Activated CD8-positive, alpha-beta T cell treated with anti-CD3 and anti-CD28 coated beads, Interleukin-2, amount 10 ng/mL, durations not matched to agents 7 days and 5 days (primary cell): ENCODE measurements at regions of chr10 and their contacts with region 1.

Region 1: DNA sequence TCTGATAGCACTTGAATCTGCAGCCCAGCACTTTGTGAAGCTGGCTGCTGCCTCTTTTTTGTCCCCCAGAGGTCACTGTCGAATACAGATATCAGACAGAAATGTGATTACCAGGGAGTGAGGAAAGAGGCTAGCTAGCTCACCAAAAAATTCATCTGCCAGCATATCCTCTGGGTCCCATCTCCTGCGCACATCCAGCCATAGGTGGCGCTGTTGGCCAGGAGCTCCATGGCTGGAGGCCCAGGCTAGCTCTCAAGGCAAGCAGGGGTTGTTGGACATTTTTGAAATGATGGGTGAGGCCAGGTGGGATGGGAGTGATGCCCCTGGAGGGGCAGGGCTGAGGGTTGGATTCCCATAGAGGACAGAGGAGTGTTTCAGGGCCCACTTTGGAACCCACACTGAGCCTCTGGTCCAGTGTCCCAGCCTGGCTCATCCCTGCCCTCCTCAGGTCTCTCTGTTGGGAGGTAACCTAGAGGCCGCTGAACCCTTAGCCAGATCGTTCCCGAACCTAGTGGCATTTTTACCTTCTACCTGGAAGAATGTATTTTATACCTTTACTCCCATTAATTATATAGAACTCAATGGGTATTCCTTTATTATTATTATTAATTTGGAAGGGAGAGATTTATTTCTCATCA is 14.8 kb downstream of the DPCD start:
- DNase-seq: peak; percentile 83
- ATAC-seq: peak; percentile 97
- H3K4me3 Mint-ChIP-seq: no peak overlapping the region
- H3K27ac Mint-ChIP-seq: no peak overlapping the region
- H3K4me1 Mint-ChIP-seq: no peaks in the 10 kb centered on the region
- H3K27me3 Mint-ChIP-seq: no peaks in the 10 kb centered on the region

Region 2: DNA sequence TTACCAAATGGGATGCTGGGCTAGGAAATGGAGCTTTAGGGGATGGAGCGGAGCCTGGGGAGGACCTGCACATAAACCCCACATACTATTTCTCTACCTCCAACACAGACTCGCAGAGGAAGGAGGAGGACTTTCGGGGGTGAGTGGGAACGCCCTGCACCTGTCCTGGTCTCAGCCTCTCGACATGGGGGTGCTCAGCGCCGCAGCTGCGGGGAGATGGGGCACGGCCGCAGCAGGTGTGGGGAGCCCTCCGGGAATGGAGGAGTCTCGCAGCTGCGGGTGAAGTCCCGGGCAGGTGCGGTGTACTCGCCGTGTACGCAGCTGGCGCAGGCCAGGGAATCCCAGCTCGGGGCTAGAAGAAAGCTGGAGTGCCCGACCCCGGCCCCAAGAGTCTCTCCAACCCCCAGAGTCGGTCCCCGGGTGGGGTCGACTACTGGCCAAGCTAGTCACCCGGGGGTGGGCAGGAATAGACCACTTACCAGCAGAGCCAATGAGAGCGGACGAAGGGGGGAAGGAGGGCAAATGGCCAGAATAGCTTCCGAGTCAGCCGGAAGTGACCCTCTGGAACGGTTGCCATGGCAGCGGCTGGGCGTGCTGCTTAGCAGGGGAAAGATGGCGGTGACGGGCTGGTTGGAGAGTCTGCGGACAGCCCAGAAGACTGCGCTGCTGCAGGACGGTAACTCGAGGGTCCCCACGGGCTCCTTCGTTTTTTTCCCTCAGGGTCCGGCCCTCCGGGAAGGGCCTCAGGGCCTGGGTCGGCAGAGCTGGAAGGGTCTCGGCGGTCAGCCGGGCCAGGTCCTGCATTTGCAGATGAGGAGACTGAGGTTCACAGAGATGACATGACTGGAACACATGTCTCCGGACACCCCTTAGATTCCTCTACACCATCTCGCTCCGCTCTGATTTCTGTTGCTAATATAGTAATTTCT is 14.9 kb before region 1 on chr10 and contains the starts of genes DPCD and POLL:
- CTCF ChIA-PET with region 1: interaction called, 22 read pairs
- POLR2A ChIA-PET with region 1: no interaction called
- DNase-seq: peak; percentile 95
- ATAC-seq: peak; percentile 94
- H3K4me3 Mint-ChIP-seq: peak within 1 kb of the TSS; percentile 91
- H3K27ac Mint-ChIP-seq: peak within 1 kb of the TSS; percentile 85
- H3K4me1 Mint-ChIP-seq: peaks cover 24% of the 10 kb centered on the region
- H3K27me3 Mint-ChIP-seq: no peaks in the 10 kb centered on the region
- total RNA-seq, gene DPCD: 5.1 to 6.2 TPM
- total RNA-seq, gene POLL: 25.3 to 28.5 TPM

Region 3: DNA sequence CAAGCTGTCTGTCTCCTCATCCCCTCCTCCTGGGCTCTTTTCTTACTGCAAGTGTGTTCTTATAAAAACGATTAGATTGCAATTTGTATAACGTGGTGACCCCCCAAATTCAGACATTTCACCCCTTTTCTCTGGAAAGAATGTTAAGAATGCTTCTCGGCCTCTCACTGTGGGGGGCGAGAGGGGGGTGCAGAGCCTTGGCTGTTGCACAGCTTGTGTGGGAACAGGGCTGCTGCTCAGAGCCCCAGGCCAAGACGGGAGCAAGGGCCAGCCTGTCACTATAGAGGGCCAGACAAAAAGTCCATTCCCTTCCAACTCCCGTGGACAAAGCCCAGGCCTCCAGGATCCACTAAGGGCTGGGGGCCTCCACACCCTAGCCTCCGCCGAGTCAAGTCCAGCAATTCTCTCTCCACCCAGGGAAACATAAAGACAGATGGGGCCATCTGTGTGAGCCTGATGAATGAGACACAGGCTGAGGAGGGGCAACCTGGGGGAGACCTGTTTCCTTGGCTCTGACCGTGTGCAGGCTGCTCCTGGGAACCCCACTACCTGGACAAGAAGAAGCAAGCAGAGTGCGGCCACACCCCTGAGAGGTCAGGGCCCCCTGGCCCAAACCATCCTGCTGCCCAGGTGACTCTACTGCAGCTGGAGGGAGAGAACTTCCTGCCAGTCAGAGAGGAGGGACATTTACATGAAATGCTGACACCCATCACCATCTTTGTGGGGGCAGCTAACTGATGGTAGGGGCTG is 12.3 kb after region 1 on chr10:
- CTCF ChIA-PET with region 1: interaction called, 11 read pairs
- POLR2A ChIA-PET with region 1: interaction called, 3 read pairs
- DNase-seq: no peak
- ATAC-seq: no peak
- H3K4me3 Mint-ChIP-seq: no peak overlapping the region
- H3K27ac Mint-ChIP-seq: no peak overlapping the region
- H3K4me1 Mint-ChIP-seq: peaks cover 11% of the 10 kb centered on the region
- H3K27me3 Mint-ChIP-seq: no peaks in the 10 kb centered on the region

Region 4: GRCh38 chr10:101644002-101644401 is 41.1 kb after region 1 on chr10:
- CTCF ChIA-PET with region 1: no interaction called
- POLR2A ChIA-PET with region 1: no interaction called
- DNase-seq: no peak
- ATAC-seq: no peak
- H3K4me3 Mint-ChIP-seq: no peak overlapping the region
- H3K27ac Mint-ChIP-seq: no peak overlapping the region
- H3K4me1 Mint-ChIP-seq: no peaks in the 10 kb centered on the region
- H3K27me3 Mint-ChIP-seq: no peaks in the 10 kb centered on the region

Region 5: GRCh38 chr10:101774589-101775272 is 171.9 kb after region 1 on chr10:
- CTCF ChIA-PET with region 1: interaction called, 242 read pairs
- POLR2A ChIA-PET with region 1: no interaction called
- DNase-seq: no peak
- ATAC-seq: no peak
- H3K4me3 Mint-ChIP-seq: no peak overlapping the region
- H3K27ac Mint-ChIP-seq: no peak overlapping the region
- H3K4me1 Mint-ChIP-seq: peaks cover 17% of the 10 kb centered on the region
- H3K27me3 Mint-ChIP-seq: peaks cover 62% of the 10 kb centered on the region